Dendritic cell treated with granulocyte-macrophage colony-stimulating factor and Interleukin-4, amounts not matched to agents 40 ng/mL and 50 ng/mL, for 4 days (primary cell): ENCODE measurements at regions of chrX and their contacts with region 1.

Region 1: DNA sequence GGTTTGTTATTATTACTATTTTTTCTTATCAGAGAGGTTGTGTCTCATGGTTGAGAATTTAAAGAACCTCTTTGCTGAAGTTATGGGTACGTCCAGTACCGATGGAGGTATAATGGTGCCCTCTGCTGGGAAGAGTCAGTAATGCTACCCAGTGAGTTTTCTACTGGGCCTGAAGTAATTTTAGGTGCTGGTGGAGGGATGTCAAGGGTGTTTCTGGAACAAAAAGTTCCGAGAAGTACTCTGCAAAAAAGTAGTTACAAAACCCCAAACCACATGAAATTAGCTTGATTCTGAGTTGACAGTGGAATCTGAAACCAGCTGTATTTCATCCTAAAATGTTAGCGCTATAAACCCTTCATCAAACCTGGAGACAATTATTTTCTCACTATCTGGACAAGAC is 102.5 kb upstream of the MID1 start:
- H3K4me3 Mint-ChIP-seq: no peak overlapping the region
- H3K27ac Mint-ChIP-seq: no peak overlapping the region
- H3K4me1 Mint-ChIP-seq: no peaks in the 10 kb centered on the region
- H3K27me3 Mint-ChIP-seq: no peaks in the 10 kb centered on the region

Region 2: GRCh38 chrX:10597871-10598270 is 125.0 kb before region 1 on chrX:
- intact Hi-C with region 1: no loop called
- H3K4me3 Mint-ChIP-seq: no peak overlapping the region
- H3K27ac Mint-ChIP-seq: no peak overlapping the region
- H3K4me1 Mint-ChIP-seq: no peaks in the 10 kb centered on the region
- H3K27me3 Mint-ChIP-seq: no peaks in the 10 kb centered on the region

Region 3: GRCh38 chrX:11137543-11138139 is 414.8 kb after region 1 on chrX:
- intact Hi-C with region 1: loop called (anchors 10 kb)
- H3K4me3 Mint-ChIP-seq: no peak overlapping the region
- H3K27ac Mint-ChIP-seq: no peak overlapping the region
- H3K4me1 Mint-ChIP-seq: no peaks in the 10 kb centered on the region
- H3K27me3 Mint-ChIP-seq: peaks cover 16% of the 10 kb centered on the region